ENCODE measurements at regions of chr5 and their contacts with region 1.

Region 1: DNA sequence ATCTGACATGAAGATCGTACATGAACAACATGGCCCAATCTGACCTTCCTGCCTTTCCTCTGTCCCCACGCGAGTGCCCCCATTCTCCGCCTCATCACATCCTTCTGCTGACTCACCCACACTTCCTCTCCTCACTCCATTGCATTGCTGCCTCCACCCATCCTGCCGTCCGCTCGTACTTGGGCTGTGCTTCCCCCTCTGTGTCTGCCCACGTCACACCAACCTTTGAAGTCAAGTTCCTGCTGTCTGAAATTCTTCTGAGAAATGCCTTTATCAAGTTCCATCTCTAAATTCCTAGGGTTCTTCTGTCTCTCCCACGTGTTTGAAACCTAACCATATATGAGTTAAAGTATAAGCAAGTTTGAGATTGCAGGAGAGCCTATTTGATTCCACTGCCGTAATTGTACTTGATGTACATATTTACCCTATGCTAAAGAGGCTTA is 18.0 kb upstream of the STARD4 start:
- DNase-seq: peak; percentile 59 to 97 (median 78)
- ATAC-seq: peak; percentile 98
- H3K4me3 ChIP-seq: peak overlapping the region; percentile 21
- H3K4me3 Mint-ChIP-seq: peak overlapping the region; percentile 3
- H3K27ac ChIP-seq: peak overlapping the region; percentile 57 to 73
- H3K27ac Mint-ChIP-seq: peak overlapping the region; percentile 71
- H3K4me1 ChIP-seq: peaks cover 13% of the 10 kb centered on the region
- H3K4me1 Mint-ChIP-seq: peaks cover 14% of the 10 kb centered on the region
- H3K27me3 ChIP-seq: no peaks in the 10 kb centered on the region
- H3K27me3 Mint-ChIP-seq: no peaks in the 10 kb centered on the region
- CTCF ChIP-seq: no peak

Region 2: DNA sequence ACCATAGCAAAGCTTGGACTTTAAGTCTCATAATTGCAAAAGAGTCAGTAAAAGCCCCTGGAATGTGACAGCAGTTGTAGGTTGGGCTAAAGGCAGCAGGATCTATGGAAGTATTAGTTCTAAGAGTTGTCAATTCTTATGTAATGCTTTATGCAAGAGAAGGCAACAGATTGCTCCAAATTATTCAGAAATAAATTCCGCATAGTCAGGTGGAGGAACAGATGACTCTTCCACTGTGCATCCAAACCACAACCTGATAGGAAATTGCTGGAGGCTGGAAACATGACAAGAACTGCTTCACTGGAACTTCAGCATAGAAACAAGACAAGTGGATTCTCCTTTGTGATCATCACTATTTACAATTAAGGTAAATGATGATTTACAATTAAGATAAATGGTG is 119.0 kb before region 1 on chr5:
- CTCF ChIA-PET with region 1: no interaction called
- POLR2A ChIA-PET with region 1: no interaction called
- intact Hi-C with region 1: no loop called
- DNase-seq: no peak
- ATAC-seq: no peak
- H3K4me3 ChIP-seq: no peak overlapping the region
- H3K4me3 Mint-ChIP-seq: no peak overlapping the region
- H3K27ac ChIP-seq: no peak overlapping the region
- H3K27ac Mint-ChIP-seq: peak overlapping the region; percentile 12
- H3K4me1 ChIP-seq: no peaks in the 10 kb centered on the region
- H3K4me1 Mint-ChIP-seq: peaks cover 21% of the 10 kb centered on the region
- H3K27me3 ChIP-seq: no peaks in the 10 kb centered on the region
- H3K27me3 Mint-ChIP-seq: no peaks in the 10 kb centered on the region
- CTCF ChIP-seq: no peak

Region 3: GRCh38 chr5:111512375-111513130 is 17.8 kb before region 1 on chr5 and contains the start of gene STARD4:
- CTCF ChIA-PET with region 1: interaction called, 24 read pairs
- POLR2A ChIA-PET with region 1: interaction called, 5 read pairs
- intact Hi-C with region 1: loop called in 1 of 2 experiments (anchors 1 kb)
- DNase-seq: peak; percentile 87 to 98 (median 93)
- ATAC-seq: peak; percentile 93
- H3K4me3 ChIP-seq: peak within 1 kb of the TSS; percentile 90
- H3K4me3 Mint-ChIP-seq: peak within 1 kb of the TSS; percentile 95
- H3K27ac ChIP-seq: peak within 1 kb of the TSS; percentile 66 to 80
- H3K27ac Mint-ChIP-seq: peak within 1 kb of the TSS; percentile 86
- H3K4me1 ChIP-seq: peaks cover 15% of the 10 kb centered on the region
- H3K4me1 Mint-ChIP-seq: peaks cover 32% of the 10 kb centered on the region
- H3K27me3 ChIP-seq: no peaks in the 10 kb centered on the region
- H3K27me3 Mint-ChIP-seq: no peaks in the 10 kb centered on the region
- CTCF ChIP-seq: no peak
- total RNA-seq, gene STARD4: 14.9 to 15.2 TPM